ENCODE measurements at regions of chr21 and their contacts with region 1.

Region 1: GRCh38 chr21:36149788-36150711 is 6.6 kb upstream of the DOP1B start:
- DNase-seq: peak in 3 of 14 experiments; percentile 39 to 53 (median 45)
- ATAC-seq: no peak
- H3K4me3 ChIP-seq: no peak overlapping the region
- H3K4me3 Mint-ChIP-seq: peak overlapping the region; percentile 43
- H3K27ac ChIP-seq: peak overlapping the region in 1 of 2 donors; percentile 31
- H3K27ac Mint-ChIP-seq: peak overlapping the region; percentile 82
- H3K4me1 ChIP-seq: peaks cover 36% of the 10 kb centered on the region
- H3K4me1 Mint-ChIP-seq: peaks cover 52% of the 10 kb centered on the region
- H3K27me3 ChIP-seq: no peaks in the 10 kb centered on the region
- H3K27me3 Mint-ChIP-seq: no peaks in the 10 kb centered on the region
- CTCF ChIP-seq: no peak

Region 2: DNA sequence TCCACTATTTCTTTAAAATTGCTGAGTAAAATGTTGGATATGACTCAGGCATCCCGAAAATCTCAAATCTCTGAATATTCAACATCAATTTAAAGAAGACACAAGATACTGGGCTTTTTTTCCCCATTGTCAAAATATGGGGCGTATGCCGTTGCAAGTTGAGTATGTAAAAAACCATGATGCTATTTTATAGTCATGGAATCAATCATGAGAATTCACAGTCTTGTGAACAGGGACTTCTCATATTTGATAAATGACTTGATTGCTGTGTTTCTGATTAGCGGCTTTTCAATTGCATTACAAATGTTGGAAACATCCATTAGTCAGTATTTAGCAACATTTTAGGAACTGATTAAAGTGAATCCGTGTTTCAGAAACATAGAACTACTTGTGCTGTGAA is 135.0 kb before region 1 on chr21:
- CTCF ChIA-PET with region 1: no interaction called
- POLR2A ChIA-PET with region 1: no interaction called
- intact Hi-C with region 1: no loop called
- DNase-seq: no peak
- ATAC-seq: no peak
- H3K4me3 ChIP-seq: no peak overlapping the region
- H3K4me3 Mint-ChIP-seq: no peak overlapping the region
- H3K27ac ChIP-seq: no peak overlapping the region
- H3K27ac Mint-ChIP-seq: no peak overlapping the region
- H3K4me1 ChIP-seq: no peaks in the 10 kb centered on the region
- H3K4me1 Mint-ChIP-seq: no peaks in the 10 kb centered on the region
- H3K27me3 ChIP-seq: peaks cover 0 to under 1% of the 10 kb centered on the region in 2 experiments
- H3K27me3 Mint-ChIP-seq: peaks cover 11% of the 10 kb centered on the region
- CTCF ChIP-seq: no peak

Region 3: GRCh38 chr21:36188081-36188681 is 38.1 kb after region 1 on chr21:
- CTCF ChIA-PET with region 1: interaction called, 6 read pairs
- POLR2A ChIA-PET with region 1: no interaction called
- intact Hi-C with region 1: loop called in 1 of 2 experiments (anchors 5 kb)
- DNase-seq: peak in 1 of 14 experiments; percentile 12
- ATAC-seq: no peak
- H3K4me3 ChIP-seq: no peak overlapping the region
- H3K4me3 Mint-ChIP-seq: no peak overlapping the region
- H3K27ac ChIP-seq: no peak overlapping the region
- H3K27ac Mint-ChIP-seq: peak overlapping the region; percentile 58
- H3K4me1 ChIP-seq: no peaks in the 10 kb centered on the region
- H3K4me1 Mint-ChIP-seq: peaks cover 11% of the 10 kb centered on the region
- H3K27me3 ChIP-seq: no peaks in the 10 kb centered on the region
- H3K27me3 Mint-ChIP-seq: no peaks in the 10 kb centered on the region
- CTCF ChIP-seq: no peak

Measured in CD4-positive, alpha-beta T cell (primary cell).